Head of caudate nucleus (tissue), 42 donors: ENCODE measurements at regions of chr11 and their contacts with region 1.

Region 1: GRCh38 chr11:85672105-85672902 is 7.4 kb upstream of the CREBZF start:
- DNase-seq: no peak

Region 2: GRCh38 chr11:85809863-85810262 is 137.6 kb after region 1 on chr11:
- intact Hi-C with region 1: loop called (anchors 10 kb)
- DNase-seq: peak in 27 of 42 donors; percentile 6 to 72 (median 36)